GM23248 (cell line): ENCODE measurements at regions of chr2 and their contacts with region 1.

Region 1: GRCh38 chr2:238847841-238848690 is at the start of gene TWIST2:
- DNase-seq: peak; percentile 99
- H3K4me3 ChIP-seq: peak within 1 kb of the TSS; percentile 98
- H3K27ac ChIP-seq: peak within 1 kb of the TSS; percentile 96
- H3K4me1 ChIP-seq: peaks cover 22% of the 10 kb centered on the region
- H3K27me3 ChIP-seq: no peaks in the 10 kb centered on the region
- total RNA-seq, gene TWIST2: 467 and 544 TPM in 2 replicates

Region 2: DNA sequence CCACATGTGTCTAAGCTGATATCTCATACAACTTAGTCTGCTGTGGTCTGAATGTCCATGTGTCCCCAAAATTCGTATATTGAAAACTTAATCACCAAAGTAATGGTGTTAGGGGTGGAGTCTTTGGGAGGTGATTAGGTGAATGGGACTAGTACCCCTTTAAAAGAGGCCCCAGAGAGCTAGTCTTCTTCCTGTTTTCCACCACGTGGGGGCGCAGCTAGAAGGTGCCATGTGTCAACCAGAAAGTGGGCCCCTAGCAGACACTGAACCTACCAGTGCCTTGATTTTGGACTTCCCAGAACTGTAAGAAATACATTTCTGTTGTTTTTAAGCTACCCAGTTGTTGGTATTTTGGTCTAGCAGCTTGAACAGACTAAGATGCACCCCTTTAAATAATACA is 334.7 kb before region 1 on chr2:
- in situ Hi-C with region 1: loop called (anchors 10 kb)
- DNase-seq: peak; percentile 81
- H3K4me3 ChIP-seq: no peak overlapping the region
- H3K27ac ChIP-seq: no peak overlapping the region
- H3K4me1 ChIP-seq: peaks cover 24% of the 10 kb centered on the region
- H3K27me3 ChIP-seq: no peaks in the 10 kb centered on the region

Region 3: GRCh38 chr2:238720232-238720672 is 127.8 kb before region 1 on chr2:
- in situ Hi-C with region 1: loop called (anchors 10 kb)
- DNase-seq: peak; percentile 51
- H3K4me3 ChIP-seq: no peak overlapping the region
- H3K27ac ChIP-seq: no peak overlapping the region
- H3K4me1 ChIP-seq: peaks cover 5% of the 10 kb centered on the region
- H3K27me3 ChIP-seq: no peaks in the 10 kb centered on the region

Region 4: DNA sequence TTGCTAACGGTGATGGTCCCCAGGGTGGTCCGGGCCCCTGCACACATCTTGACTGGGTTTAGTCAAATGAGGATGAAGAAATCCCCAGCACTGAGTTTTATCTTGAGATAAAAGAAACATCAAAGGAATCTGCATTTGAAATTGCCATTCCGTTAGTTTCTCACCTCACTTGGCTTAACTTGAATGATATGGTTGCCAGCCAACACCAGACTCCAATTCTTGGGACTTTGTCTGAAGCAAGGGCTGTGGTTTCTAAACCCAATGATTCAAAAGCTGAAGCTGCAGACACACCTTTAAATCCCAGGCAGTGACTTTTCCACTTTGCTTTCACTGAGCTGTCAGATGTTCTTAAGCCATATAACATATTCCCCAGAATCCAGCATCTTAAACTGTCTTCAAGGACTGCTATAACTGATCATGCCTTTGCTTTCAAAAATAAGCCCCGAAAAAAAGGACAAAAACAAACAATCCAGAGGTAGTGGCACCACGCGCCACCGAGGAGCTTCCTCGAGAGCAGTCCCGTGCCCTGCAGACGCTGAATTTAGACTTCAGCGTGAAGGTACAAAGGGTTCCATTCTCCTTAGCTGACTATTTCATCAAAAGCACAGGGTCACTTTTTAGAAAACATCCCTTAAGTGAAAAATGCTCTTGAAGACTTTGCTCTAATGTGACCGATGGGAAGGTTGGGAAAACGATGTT is 363.5 kb after region 1 on chr2:
- in situ Hi-C with region 1: no loop called
- DNase-seq: peak; percentile 11
- H3K4me3 ChIP-seq: no peak overlapping the region
- H3K27ac ChIP-seq: no peak overlapping the region
- H3K4me1 ChIP-seq: no peaks in the 10 kb centered on the region
- H3K27me3 ChIP-seq: no peaks in the 10 kb centered on the region